ENCODE measurements at regions of chr2 and their contacts with region 1.

Region 1: DNA sequence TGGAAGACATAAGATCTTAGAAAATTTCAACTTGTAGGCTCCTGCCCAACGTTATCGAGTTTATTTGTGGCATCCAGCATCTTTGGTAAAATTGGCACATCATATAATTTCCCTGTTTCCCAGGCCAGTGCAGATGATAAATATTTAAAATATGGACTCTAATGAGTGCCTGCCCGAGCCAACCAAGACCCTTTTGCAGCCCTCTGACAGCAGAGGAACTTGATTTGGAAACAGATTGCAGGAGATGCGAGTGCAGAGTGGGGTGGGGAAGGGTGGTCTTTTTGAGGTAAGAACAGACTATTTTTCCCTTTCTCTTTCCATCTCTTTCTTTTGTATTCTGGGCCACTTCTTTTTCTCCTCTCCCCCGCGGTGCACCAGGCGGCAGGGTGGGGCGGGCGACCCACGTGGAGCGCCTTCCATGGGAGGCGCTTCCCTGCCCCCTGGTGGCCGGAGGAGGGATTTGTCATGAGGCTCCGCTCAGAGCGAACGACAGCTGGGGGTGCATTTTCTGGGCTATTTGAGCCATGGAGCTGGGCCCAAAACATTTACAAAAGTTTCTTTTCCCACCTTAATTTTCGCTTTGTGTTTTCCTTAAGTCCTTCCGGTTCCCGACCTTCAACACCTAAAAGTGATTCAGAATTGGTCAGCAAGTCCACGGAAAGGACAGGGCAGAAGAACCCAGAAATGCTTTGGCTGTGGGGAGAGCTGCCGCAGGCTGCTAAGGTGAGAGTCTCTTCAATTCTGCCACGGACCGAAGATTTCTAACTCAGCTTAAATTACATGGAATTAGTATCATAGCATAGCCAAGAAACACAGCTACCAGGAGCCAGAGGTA is 32.7 kb downstream of the LPIN1 start:
- DNase-seq: peak; percentile 73
- H3K4me3 Mint-ChIP-seq: no peak overlapping the region
- H3K27ac Mint-ChIP-seq: peak overlapping the region; percentile 16
- H3K4me1 Mint-ChIP-seq: peaks cover 4% of the 10 kb centered on the region
- H3K27me3 Mint-ChIP-seq: no peaks in the 10 kb centered on the region
- CTCF ChIP-seq: peak; percentile 98

Region 2: DNA sequence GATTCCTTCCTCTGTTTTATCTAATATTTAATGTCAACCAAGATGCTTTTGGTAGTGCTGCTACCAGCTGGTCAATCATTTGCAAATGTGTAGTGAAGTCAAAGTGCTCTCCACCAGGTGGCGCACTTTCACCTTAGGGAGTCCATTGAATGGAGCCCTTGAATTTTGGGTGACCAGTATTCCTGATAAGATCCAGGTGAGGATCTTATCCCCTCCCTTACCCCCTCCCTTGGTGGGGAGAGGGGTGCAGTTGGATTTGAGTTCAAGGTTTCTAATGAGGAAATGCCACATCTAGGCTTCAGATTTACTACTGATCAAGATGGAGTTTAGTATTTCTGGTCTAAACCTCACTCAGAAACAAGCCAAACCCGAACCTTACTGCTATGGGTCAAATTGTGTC is 301.1 kb before region 1 on chr2:
- CTCF ChIA-PET with region 1: interaction called, 3 read pairs
- POLR2A ChIA-PET with region 1: no interaction called
- intact Hi-C with region 1: loop called (anchors 5 kb)
- DNase-seq: peak; percentile 93
- H3K4me3 Mint-ChIP-seq: no peak overlapping the region
- H3K27ac Mint-ChIP-seq: no peak overlapping the region
- H3K4me1 Mint-ChIP-seq: peaks cover 2% of the 10 kb centered on the region
- H3K27me3 Mint-ChIP-seq: peaks cover 27% of the 10 kb centered on the region
- CTCF ChIP-seq: peak; percentile 77

Region 3: GRCh38 chr2:11532380-11533054 is 246.6 kb before region 1 on chr2:
- CTCF ChIA-PET with region 1: no interaction called
- POLR2A ChIA-PET with region 1: no interaction called
- intact Hi-C with region 1: no loop called
- DNase-seq: peak; percentile 73
- H3K4me3 Mint-ChIP-seq: peak overlapping the region; percentile 53
- H3K27ac Mint-ChIP-seq: peak overlapping the region; percentile 62
- H3K4me1 Mint-ChIP-seq: peaks cover 44% of the 10 kb centered on the region
- H3K27me3 Mint-ChIP-seq: peaks cover 10% of the 10 kb centered on the region
- CTCF ChIP-seq: no peak

Region 4: GRCh38 chr2:11688222-11689069 is 90.7 kb before region 1 on chr2:
- CTCF ChIA-PET with region 1: interaction called, 336 read pairs
- POLR2A ChIA-PET with region 1: interaction called, 4 read pairs
- intact Hi-C with region 1: loop called (anchors 1 kb)
- DNase-seq: peak; percentile 81
- H3K4me3 Mint-ChIP-seq: peak overlapping the region; percentile 70
- H3K27ac Mint-ChIP-seq: peak overlapping the region; percentile 37
- H3K4me1 Mint-ChIP-seq: peaks cover 10% of the 10 kb centered on the region
- H3K27me3 Mint-ChIP-seq: peaks cover 16% of the 10 kb centered on the region
- CTCF ChIP-seq: peak; percentile 82

Region 5: DNA sequence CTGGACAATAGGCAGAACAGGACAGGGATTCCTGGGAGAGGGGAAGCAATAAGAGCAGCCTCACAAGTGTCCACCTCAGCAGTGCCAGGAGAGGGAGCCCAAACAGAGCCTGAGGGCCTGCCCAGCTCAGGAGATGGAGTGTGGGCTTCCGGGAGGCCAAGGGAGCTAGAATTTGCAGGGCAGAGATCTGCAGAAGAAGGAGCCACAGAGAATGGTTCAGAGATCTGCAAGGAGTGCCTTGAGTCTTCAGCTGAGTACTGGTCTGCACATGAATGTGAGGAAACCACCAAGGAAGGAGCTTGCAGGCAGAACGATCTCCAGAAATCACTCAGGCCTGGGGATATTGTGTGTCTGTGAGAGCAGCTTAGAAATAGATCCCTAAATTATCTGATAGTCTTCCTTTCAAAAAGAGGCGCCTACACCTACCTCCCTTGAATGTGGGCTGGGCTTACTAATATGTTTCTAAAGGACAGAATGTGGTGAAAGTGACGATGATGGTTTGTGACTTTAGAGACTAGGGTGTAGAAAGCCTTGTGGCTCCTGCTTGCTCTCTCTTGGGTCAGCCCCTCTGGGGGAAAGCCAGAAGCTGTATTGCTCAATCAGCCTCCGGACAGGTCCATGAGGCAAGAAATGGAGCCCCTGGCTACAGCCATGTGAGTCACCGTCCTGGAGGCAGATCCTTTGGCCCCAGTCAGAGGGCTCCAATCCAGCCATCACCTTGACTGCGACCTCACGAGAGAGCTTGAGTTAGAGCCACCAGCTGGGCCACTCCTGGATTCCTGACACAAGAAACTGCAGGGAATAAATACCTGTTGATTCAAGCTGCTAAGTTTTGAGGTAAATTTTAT is 40.3 kb before region 1 on chr2:
- CTCF ChIA-PET with region 1: interaction called, 13 read pairs
- POLR2A ChIA-PET with region 1: interaction called, 3 read pairs
- intact Hi-C with region 1: loop called (anchors 1 kb)
- DNase-seq: peak; percentile 85
- H3K4me3 Mint-ChIP-seq: no peak overlapping the region
- H3K27ac Mint-ChIP-seq: peak overlapping the region; percentile 44
- H3K4me1 Mint-ChIP-seq: peaks cover 19% of the 10 kb centered on the region
- H3K27me3 Mint-ChIP-seq: no peaks in the 10 kb centered on the region
- CTCF ChIP-seq: peak; percentile 38

Region 6: GRCh38 chr2:11764359-11764758 is 14.8 kb before region 1 on chr2:
- CTCF ChIA-PET with region 1: interaction called, 21 read pairs
- POLR2A ChIA-PET with region 1: interaction called, 3 read pairs
- intact Hi-C with region 1: no loop called
- DNase-seq: no peak
- H3K4me3 Mint-ChIP-seq: no peak overlapping the region
- H3K27ac Mint-ChIP-seq: peak overlapping the region; percentile 67
- H3K4me1 Mint-ChIP-seq: peaks cover 22% of the 10 kb centered on the region
- H3K27me3 Mint-ChIP-seq: no peaks in the 10 kb centered on the region
- CTCF ChIP-seq: no peak

Region 7: DNA sequence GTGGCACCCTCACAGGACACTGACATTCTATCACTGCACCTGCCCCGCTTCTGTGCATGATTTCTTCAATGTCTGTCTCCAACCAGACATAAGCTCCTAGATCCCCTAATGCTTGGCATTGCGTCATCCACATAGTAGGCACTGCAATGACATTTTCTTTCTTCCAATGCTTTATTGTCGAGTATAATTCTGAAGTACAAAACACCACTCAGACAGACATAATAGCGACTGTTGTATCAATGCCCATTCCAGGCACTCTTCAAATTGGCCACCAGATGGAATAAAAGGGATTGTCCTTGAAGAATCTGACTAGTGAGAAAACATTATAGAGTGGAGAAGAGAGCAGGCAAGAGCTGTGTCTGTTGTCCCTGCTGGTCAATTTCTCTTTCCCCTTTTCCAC is 56.3 kb after region 1 on chr2:
- CTCF ChIA-PET with region 1: no interaction called
- POLR2A ChIA-PET with region 1: no interaction called
- intact Hi-C with region 1: no loop called
- DNase-seq: peak; percentile 14
- H3K4me3 Mint-ChIP-seq: no peak overlapping the region
- H3K27ac Mint-ChIP-seq: no peak overlapping the region
- H3K4me1 Mint-ChIP-seq: peaks cover 5% of the 10 kb centered on the region
- H3K27me3 Mint-ChIP-seq: no peaks in the 10 kb centered on the region
- CTCF ChIP-seq: peak; percentile 12